Heart right ventricle (tissue), 16 donors: ENCODE measurements at regions of chr10 and their contacts with region 1.

Region 1: DNA sequence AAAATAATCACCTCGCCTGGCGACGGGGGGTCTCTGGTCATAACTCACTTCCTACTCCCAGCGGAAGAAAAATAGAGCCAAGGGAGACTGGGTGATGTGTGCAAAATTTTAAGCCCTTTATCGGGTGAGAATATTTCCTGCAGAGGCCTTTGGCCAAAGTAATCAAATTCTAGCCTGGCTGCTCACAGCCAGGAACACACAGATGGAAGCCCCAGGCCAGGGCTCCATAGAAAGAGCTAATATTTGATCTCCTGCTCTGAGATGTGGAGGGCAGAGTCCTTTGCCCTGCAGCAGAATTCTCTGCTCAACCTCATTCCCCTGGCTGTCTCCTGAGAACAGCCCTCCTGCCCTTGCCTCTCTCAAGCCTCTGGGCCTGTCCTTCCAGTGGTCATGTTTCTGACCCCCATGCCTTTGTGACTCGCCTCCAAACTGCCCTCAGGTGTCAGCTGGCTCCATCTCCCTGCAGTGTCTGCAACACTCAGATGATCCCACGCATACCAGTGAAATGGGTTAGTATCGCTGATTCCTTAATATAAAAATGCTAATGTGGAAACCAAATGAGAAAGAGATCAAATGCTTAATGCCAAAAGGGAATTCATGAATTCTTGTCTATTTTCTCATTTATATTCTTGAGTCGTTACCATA is 34.5 kb downstream of the FRMD4A start:
- DNase-seq: peak in 1 of 2 donors; percentile 12
- ATAC-seq: peak in 6 of 8 donors; percentile 29 to 74 (median 59)
- H3K4me3 ChIP-seq: no peak overlapping the region
- H3K27ac ChIP-seq: peak overlapping the region in 1 of 10 donors; percentile 20
- H3K4me1 ChIP-seq: peaks cover 0 to 20% (median 11%) of the 10 kb centered on the region in 9 donors
- H3K27me3 ChIP-seq: peaks cover 0 to 13% (median 7%) of the 10 kb centered on the region in 7 donors
- CTCF ChIP-seq: no peak

Region 2: DNA sequence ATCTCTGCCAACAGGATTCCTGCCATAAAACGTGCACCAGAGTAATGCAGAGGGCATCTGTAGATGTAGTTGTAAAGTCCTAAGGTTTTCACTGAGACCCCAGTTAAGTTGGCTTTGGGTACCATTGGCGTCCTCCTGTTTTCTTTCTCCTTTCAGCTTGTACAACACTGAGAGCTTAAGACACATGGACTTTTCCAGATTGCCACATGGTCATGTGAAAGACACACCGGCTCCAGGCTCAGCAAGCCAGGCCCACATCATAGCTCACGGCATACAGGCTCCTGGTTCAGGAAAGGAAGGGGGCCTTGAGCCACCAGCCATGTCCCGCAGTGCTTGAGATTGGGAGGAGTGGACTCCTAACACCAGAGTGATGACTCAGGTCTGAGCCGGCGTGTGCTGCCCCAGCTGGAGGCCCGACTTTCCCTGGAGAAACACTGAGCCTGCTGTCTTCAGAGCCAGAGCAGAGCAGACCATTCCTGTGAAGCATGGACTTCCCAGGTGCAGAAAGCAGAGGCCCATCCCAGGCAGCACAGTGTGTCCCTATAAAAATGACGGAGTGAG is 456.7 kb before region 1 on chr10:
- intact Hi-C with region 1: no loop called
- DNase-seq: peak; percentile 23 to 43
- ATAC-seq: peak; percentile 12 to 81 (median 56)
- H3K4me3 ChIP-seq: no peak overlapping the region
- H3K27ac ChIP-seq: peak overlapping the region in 9 of 10 donors; percentile 2 to 67 (median 46)
- H3K4me1 ChIP-seq: peaks cover 6 to 77% (median 46%) of the 10 kb centered on the region in 9 donors
- H3K27me3 ChIP-seq: no peaks in the 10 kb centered on the region
- CTCF ChIP-seq: no peak

Region 3: DNA sequence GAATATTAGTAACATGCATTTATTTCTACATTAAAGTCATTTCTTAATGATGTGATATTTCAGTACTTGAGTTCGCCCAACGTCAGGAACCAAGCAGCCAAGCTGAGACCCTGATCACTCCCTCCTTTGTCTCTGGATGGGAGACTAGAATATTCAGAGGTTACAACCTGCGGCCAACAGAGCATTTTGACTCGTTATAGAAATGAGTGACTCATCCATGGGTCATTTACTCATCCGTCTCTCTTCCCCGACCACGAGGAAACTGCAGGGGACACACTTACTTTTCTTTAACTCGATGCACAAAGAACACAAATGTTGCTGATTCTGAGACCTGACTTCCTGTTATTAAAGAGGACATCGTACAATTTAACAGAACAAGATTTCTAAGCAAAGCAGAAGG is 308.7 kb before region 1 on chr10:
- intact Hi-C with region 1: no loop called
- DNase-seq: no peak
- ATAC-seq: peak in 1 of 8 donors; percentile 28
- H3K4me3 ChIP-seq: no peak overlapping the region
- H3K27ac ChIP-seq: peak overlapping the region in 4 of 10 donors; percentile 5 to 50 (median 32)
- H3K4me1 ChIP-seq: peaks cover 6 to 46% (median 40%) of the 10 kb centered on the region in 9 donors
- H3K27me3 ChIP-seq: no peaks in the 10 kb centered on the region
- CTCF ChIP-seq: no peak

Region 4: DNA sequence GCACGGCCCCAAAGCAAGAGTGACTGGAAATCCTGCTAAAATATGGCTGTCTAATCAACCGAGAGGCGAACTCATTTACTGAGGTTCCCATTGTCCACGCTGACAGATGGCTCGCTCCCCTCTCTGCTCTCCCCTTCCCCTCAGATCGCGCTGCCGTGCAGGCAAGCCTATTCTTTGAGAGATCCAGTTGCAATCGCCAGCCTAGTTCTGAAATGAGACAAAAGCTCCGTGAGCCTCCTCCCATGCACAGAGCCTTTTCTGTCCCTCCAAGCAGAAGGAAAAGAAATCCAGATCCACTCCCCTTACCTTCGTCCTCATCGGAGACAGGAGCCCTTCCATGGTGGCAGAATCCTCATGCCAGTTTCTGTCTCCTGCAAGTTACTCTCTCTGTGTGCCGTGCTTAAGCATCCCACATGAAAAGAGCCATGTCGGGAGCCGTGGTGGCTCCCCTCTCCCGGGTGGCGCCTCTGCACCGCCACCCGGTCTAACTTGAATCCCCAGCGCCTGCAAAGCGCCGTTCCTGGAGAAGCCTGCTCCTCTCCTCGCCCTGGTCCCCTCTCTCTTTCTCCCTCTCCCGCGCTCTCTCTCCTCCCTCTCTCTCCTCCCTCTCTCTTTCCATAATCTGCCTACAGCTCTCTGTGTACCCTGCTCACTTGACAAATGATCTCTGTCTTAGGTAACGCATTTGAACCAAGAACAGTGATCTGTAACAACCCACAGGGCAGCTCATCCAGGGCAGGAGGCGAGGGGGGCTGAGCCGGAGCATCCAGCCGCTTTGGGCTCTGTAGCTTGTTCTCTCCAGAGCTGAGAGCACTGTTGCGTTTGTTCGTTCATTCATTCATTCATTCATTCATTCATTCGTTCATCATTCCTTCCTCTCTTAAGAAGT is 122.2 kb before region 1 on chr10:
- intact Hi-C with region 1: loop called in 1 of 10 experiments (anchors 10 kb)
- DNase-seq: no peak
- ATAC-seq: peak in 5 of 8 donors; percentile 22 to 57 (median 46)
- H3K4me3 ChIP-seq: peak overlapping the region in 9 of 10 donors; percentile 16 to 52 (median 48)
- H3K27ac ChIP-seq: no peak overlapping the region
- H3K4me1 ChIP-seq: peaks cover 0 to 15% (median 12%) of the 10 kb centered on the region in 9 donors
- H3K27me3 ChIP-seq: peaks cover 0 to 91% (median 57%) of the 10 kb centered on the region in 7 donors
- CTCF ChIP-seq: no peak